T-cell (primary cell): ENCODE measurements at regions of chr1 and their contacts with region 1.

Region 1: DNA sequence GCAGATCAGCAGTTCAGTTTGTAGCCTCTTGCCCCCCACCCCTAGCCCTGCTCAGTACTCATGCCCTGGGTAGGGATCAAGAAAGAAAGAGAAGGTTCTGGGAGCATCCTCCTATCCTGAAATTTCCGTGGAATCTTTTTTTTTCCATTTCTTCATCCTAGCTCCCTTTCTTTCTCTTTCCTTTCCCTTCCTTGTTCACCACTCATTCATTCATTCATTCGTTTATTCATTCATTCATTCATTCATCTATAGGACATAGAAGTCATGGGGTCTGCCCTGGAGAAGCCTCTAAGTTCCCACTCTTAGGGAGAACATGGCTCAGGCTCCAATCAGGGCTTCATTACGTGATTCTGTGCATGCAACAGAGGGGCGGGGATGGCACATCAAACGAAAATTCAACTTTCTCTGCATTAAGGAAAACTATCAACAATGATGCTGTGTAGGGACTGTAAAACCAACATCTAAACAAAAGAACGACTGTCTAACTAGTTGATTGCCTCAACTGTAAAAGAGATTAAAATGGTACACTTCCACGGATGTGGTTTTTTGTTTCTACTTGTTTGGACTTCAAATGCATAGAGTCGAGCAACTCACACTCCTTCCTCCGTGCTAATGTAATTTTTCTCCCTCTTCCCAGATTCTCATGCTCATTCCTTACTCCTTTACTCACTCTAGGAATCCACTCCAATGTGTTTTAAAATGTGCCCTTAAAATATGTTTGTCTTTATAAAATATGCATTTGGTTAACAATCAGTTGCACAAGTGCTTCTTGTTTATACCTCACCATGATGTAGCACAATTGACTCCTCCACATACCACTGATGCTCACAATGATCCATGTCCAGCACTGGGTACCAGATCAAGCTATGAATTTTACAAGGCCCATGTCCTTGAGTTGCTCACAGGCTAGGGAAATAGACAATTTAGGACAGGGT is 101.2 kb upstream of the SLC2A1 start:
- DNase-seq: no peak
- ATAC-seq: no peak
- H3K4me3 ChIP-seq: no peak overlapping the region
- H3K4me3 Mint-ChIP-seq: no peak overlapping the region
- H3K27ac ChIP-seq: no peak overlapping the region
- H3K27ac Mint-ChIP-seq: no peak overlapping the region
- H3K4me1 ChIP-seq: peaks cover 0 to 5% of the 10 kb centered on the region in 2 experiments
- H3K4me1 Mint-ChIP-seq: peaks cover 9 to 20% (median 12%) of the 10 kb centered on the region in 3 donors
- H3K27me3 ChIP-seq: peaks cover 0 to 17% of the 10 kb centered on the region in 2 experiments
- H3K27me3 Mint-ChIP-seq: peaks cover 3 to 10% of the 10 kb centered on the region in 2 donors

Region 2: GRCh38 chr1:43156026-43156425 is 96.1 kb after region 1 on chr1:
- CTCF ChIA-PET with region 1: interaction called in 1 of 2 experiments, 16 read pairs
- POLR2A ChIA-PET with region 1: no interaction called
- DNase-seq: no peak
- ATAC-seq: no peak
- H3K4me3 ChIP-seq: no peak overlapping the region
- H3K4me3 Mint-ChIP-seq: no peak overlapping the region
- H3K27ac ChIP-seq: no peak overlapping the region
- H3K27ac Mint-ChIP-seq: no peak overlapping the region
- H3K4me1 ChIP-seq: no peaks in the 10 kb centered on the region
- H3K4me1 Mint-ChIP-seq: no peaks in the 10 kb centered on the region
- H3K27me3 ChIP-seq: peaks cover 0 to 12% of the 10 kb centered on the region in 2 experiments
- H3K27me3 Mint-ChIP-seq: peaks cover 12 to 14% of the 10 kb centered on the region in 2 donors